Gastrocnemius medialis (tissue), 4 donors: ENCODE measurements at regions of chr2 and their contacts with region 1.

Region 1: GRCh38 chr2:56483081-56483480 is 299.3 kb downstream of the CCDC85A start:
- DNase-seq: no peak
- ATAC-seq: no peak
- H3K4me3 ChIP-seq: no peak overlapping the region
- H3K27ac ChIP-seq: no peak overlapping the region
- H3K4me1 ChIP-seq: no peaks in the 10 kb centered on the region
- H3K27me3 ChIP-seq: no peaks in the 10 kb centered on the region
- CTCF ChIP-seq: no peak
- POLR2A ChIP-seq: no peak

Region 2: GRCh38 chr2:56390644-56391043 is 92.4 kb before region 1 on chr2:
- in situ Hi-C with region 1: no loop called
- intact Hi-C with region 1: no loop called
- DNase-seq: no peak
- ATAC-seq: no peak
- H3K4me3 ChIP-seq: no peak overlapping the region
- H3K27ac ChIP-seq: no peak overlapping the region
- H3K4me1 ChIP-seq: no peaks in the 10 kb centered on the region
- H3K27me3 ChIP-seq: no peaks in the 10 kb centered on the region
- CTCF ChIP-seq: no peak
- POLR2A ChIP-seq: no peak

Region 3: DNA sequence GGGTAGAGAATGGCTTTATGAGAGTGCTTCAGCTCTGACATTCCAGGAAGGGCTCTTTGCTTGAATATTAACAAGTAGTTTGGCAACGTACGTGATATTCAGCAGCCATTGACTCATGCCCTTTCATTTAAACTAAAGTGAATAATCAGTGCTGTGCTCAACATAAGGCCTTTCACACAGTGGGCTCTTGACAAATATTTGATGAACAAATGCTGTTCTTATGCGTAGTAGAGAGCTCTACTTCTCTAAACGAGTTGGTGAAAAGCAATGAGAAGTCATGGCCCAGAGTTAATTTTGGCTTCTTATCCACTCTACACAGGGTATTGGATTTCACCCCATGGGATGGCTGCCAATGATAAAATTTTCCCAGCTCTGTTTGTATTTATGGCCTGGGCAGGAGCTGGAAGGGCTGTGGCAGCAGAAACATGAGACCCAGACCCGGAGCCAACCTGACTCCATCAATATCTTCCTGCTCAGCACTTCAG is 39.6 kb after region 1 on chr2:
- in situ Hi-C with region 1: loop called in 1 of 4 experiments (anchors 5 kb)
- intact Hi-C with region 1: no loop called
- DNase-seq: peak; percentile 24 to 65
- ATAC-seq: peak; percentile 79 to 98
- H3K4me3 ChIP-seq: no peak overlapping the region
- H3K27ac ChIP-seq: peak overlapping the region in 2 of 4 donors; percentile 34 to 67
- H3K4me1 ChIP-seq: peaks cover 0 to 5% of the 10 kb centered on the region in 2 donors
- H3K27me3 ChIP-seq: no peaks in the 10 kb centered on the region
- CTCF ChIP-seq: no peak
- POLR2A ChIP-seq: no peak